ENCODE measurements at regions of chr18 and their contacts with region 1.

Region 1: DNA sequence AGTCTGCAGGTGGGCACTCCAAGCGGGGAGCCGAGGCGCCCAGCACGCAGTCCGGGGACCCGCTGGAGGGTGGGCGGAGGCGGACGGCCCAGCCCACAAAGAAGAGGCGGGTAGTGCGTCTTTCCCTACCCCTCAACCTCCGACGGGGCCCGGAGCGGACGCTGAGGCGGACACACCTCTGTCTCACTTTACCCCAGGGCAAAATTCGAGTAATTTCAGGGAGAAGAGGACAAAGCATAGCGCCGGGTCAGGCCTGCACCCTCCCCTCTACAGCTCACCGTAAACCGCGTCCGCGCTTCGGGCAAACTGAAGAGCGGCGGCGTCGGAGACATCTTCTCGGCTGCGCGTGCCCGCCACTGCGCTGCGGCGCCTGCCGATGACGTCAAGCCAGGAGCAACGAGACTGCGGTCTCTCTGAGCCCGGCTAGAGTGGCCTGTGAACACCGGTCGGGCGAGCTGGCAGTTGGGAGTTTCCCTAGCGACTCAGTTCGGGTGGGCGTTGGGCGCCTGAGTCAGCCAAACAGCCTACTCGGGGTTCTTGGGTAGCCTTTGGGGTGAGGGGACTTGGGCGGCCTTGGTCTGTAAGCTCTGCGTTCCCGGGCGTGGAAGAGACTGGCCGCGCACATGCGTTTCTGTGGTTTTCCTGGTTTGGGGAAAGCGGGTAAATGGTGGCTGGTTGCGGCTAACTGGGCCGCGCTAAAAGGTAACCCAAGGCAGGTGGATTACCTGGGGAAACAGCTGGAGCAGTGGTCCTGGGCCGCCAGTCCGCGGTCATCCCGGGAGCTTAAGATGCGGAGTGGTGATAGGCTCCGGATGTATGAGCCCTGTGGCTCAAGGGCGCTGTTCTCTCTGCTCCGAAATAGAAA is at the start of gene THOC1:
- DNase-seq: peak; percentile 85 to 97 (median 92)
- ATAC-seq: peak; percentile 89
- H3K4me3 ChIP-seq: peak within 1 kb of the TSS; percentile 99
- H3K4me3 Mint-ChIP-seq: peak within 1 kb of the TSS; percentile 98
- H3K27ac ChIP-seq: peak within 1 kb of the TSS; percentile 97 to 98
- H3K27ac Mint-ChIP-seq: peak within 1 kb of the TSS; percentile 100
- H3K4me1 ChIP-seq: peaks cover 24% of the 10 kb centered on the region
- H3K4me1 Mint-ChIP-seq: peaks cover 44% of the 10 kb centered on the region
- H3K27me3 ChIP-seq: no peaks in the 10 kb centered on the region
- H3K27me3 Mint-ChIP-seq: no peaks in the 10 kb centered on the region
- CTCF ChIP-seq: no peak
- total RNA-seq, gene THOC1: 92.9 to 96.5 TPM

Region 2: GRCh38 chr18:158128-159036 is 109.5 kb before region 1 on chr18 and contains the start of gene USP14:
- CTCF ChIA-PET with region 1: interaction called, 3 read pairs
- POLR2A ChIA-PET with region 1: interaction called, 51 read pairs
- intact Hi-C with region 1: loop called (anchors 1 to 2 kb)
- DNase-seq: peak; percentile 92 to 99 (median 96)
- ATAC-seq: peak; percentile 90
- H3K4me3 ChIP-seq: peak within 1 kb of the TSS; percentile 69
- H3K4me3 Mint-ChIP-seq: peak within 1 kb of the TSS; percentile 97
- H3K27ac ChIP-seq: peak within 1 kb of the TSS; percentile 19 to 74
- H3K27ac Mint-ChIP-seq: peak within 1 kb of the TSS; percentile 95
- H3K4me1 ChIP-seq: peaks cover 19% of the 10 kb centered on the region
- H3K4me1 Mint-ChIP-seq: peaks cover 37% of the 10 kb centered on the region
- H3K27me3 ChIP-seq: no peaks in the 10 kb centered on the region
- H3K27me3 Mint-ChIP-seq: no peaks in the 10 kb centered on the region
- CTCF ChIP-seq: no peak
- total RNA-seq, gene USP14: 51.3 to 56.2 TPM

Region 3: DNA sequence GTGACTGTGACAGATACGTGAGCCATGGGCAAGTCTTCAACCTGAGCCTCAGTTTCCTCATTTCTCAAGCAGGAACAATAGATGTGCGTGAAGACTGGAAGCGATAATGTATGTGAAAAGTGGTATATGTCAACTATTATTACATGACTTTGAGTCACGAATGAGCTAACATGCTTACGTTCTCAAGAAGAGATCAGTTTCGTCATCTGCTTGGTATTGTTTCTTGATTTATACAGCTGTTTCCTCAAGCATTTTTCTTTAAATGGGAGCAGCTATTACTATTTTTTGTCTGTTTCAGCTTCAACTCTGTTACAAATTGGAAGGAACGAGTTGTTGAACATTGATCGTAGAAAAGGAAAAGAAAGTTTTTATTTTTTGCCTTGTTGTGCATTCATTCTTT is 48.5 kb after region 1 on chr18:
- CTCF ChIA-PET with region 1: no interaction called
- POLR2A ChIA-PET with region 1: no interaction called
- intact Hi-C with region 1: no loop called
- DNase-seq: no peak
- ATAC-seq: no peak
- H3K4me3 ChIP-seq: no peak overlapping the region
- H3K4me3 Mint-ChIP-seq: no peak overlapping the region
- H3K27ac ChIP-seq: no peak overlapping the region
- H3K27ac Mint-ChIP-seq: no peak overlapping the region
- H3K4me1 ChIP-seq: no peaks in the 10 kb centered on the region
- H3K4me1 Mint-ChIP-seq: no peaks in the 10 kb centered on the region
- H3K27me3 ChIP-seq: peaks cover 0 to 2% of the 10 kb centered on the region in 2 experiments
- H3K27me3 Mint-ChIP-seq: no peaks in the 10 kb centered on the region
- CTCF ChIP-seq: no peak

Region 4: DNA sequence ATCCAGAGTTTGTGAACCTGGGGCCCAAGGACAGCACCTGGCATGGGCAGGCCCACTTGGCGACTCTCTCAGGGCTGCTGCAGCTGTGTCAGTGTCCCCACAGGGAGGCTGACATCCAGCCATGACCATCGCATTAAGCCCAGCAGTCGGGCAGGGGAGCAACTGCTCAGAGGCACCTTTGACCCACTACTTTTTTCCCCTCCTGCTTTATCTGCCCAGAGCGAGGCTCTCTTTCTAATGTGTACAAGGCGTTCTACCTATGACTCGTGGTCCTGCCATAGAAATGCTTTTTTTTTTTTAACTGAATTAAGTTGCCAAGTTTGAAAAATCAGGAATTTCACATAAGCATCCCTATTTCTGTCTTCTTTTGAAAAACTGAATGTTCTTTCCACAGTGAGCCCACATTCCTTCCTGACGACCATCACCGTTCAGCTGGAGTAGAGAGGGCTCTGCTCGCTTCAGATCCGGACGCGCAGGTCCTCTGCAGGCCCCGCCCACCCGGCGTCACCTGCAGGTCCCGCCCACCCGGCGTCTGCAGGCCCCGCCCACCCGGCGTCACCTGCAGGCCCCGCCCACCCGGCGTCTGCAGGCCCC is 328.5 kb after region 1 on chr18:
- CTCF ChIA-PET with region 1: no interaction called
- POLR2A ChIA-PET with region 1: no interaction called
- intact Hi-C with region 1: loop called in 1 of 2 experiments (anchors 2 kb)
- DNase-seq: peak in 3 of 14 experiments; percentile 68 to 84 (median 83)
- ATAC-seq: peak; percentile 69
- H3K4me3 ChIP-seq: no peak overlapping the region
- H3K4me3 Mint-ChIP-seq: peak overlapping the region; percentile 42
- H3K27ac ChIP-seq: no peak overlapping the region
- H3K27ac Mint-ChIP-seq: no peak overlapping the region
- H3K4me1 ChIP-seq: peaks cover 13% of the 10 kb centered on the region
- H3K4me1 Mint-ChIP-seq: peaks cover 10% of the 10 kb centered on the region
- H3K27me3 ChIP-seq: peaks cover 3 to 28% of the 10 kb centered on the region in 2 experiments
- H3K27me3 Mint-ChIP-seq: peaks cover 55% of the 10 kb centered on the region
- CTCF ChIP-seq: no peak

Region 5: GRCh38 chr18:712401-713134 is 444.6 kb after region 1 on chr18 and contains the start of gene ENOSF1:
- CTCF ChIA-PET with region 1: no interaction called
- POLR2A ChIA-PET with region 1: no interaction called
- intact Hi-C with region 1: loop called in 1 of 2 experiments (anchors 2 kb)
- DNase-seq: peak; percentile 55 to 91 (median 73)
- ATAC-seq: peak; percentile 73
- H3K4me3 ChIP-seq: peak within 1 kb of the TSS; percentile 78
- H3K4me3 Mint-ChIP-seq: peak within 1 kb of the TSS; percentile 95
- H3K27ac ChIP-seq: peak within 1 kb of the TSS; percentile 71 to 81
- H3K27ac Mint-ChIP-seq: peak within 1 kb of the TSS; percentile 92
- H3K4me1 ChIP-seq: peaks cover 27% of the 10 kb centered on the region
- H3K4me1 Mint-ChIP-seq: peaks cover 38% of the 10 kb centered on the region
- H3K27me3 ChIP-seq: no peaks in the 10 kb centered on the region
- H3K27me3 Mint-ChIP-seq: no peaks in the 10 kb centered on the region
- CTCF ChIP-seq: peak; percentile 49
- total RNA-seq, gene ENOSF1: 37.8 to 40.1 TPM

Region 6: GRCh38 chr18:939167-939566 is 671.2 kb after region 1 on chr18:
- CTCF ChIA-PET with region 1: no interaction called
- POLR2A ChIA-PET with region 1: no interaction called
- intact Hi-C with region 1: no loop called
- DNase-seq: no peak
- ATAC-seq: no peak
- H3K4me3 ChIP-seq: no peak overlapping the region
- H3K4me3 Mint-ChIP-seq: no peak overlapping the region
- H3K27ac ChIP-seq: no peak overlapping the region
- H3K27ac Mint-ChIP-seq: no peak overlapping the region
- H3K4me1 ChIP-seq: no peaks in the 10 kb centered on the region
- H3K4me1 Mint-ChIP-seq: no peaks in the 10 kb centered on the region
- H3K27me3 ChIP-seq: no peaks in the 10 kb centered on the region
- H3K27me3 Mint-ChIP-seq: peaks cover 38% of the 10 kb centered on the region
- CTCF ChIP-seq: no peak